Caco-2 (cell line): ENCODE measurements at regions of chr4 and their contacts with region 1.

Region 1: GRCh38 chr4:136637071-136637777 is 895.1 kb downstream of the PCDH18 start:
- DNase-seq: peak in 1 of 2 experiments; percentile 40
- H3K4me3 ChIP-seq: no peak overlapping the region
- H3K4me3 Mint-ChIP-seq: no peak overlapping the region
- H3K27ac Mint-ChIP-seq: no peak overlapping the region
- H3K4me1 ChIP-seq: no peaks in the 10 kb centered on the region
- H3K4me1 Mint-ChIP-seq: no peaks in the 10 kb centered on the region
- H3K27me3 ChIP-seq: no peaks in the 10 kb centered on the region
- H3K27me3 Mint-ChIP-seq: peaks cover 8% of the 10 kb centered on the region
- CTCF ChIP-seq: peak; percentile 46 to 57

Region 2: DNA sequence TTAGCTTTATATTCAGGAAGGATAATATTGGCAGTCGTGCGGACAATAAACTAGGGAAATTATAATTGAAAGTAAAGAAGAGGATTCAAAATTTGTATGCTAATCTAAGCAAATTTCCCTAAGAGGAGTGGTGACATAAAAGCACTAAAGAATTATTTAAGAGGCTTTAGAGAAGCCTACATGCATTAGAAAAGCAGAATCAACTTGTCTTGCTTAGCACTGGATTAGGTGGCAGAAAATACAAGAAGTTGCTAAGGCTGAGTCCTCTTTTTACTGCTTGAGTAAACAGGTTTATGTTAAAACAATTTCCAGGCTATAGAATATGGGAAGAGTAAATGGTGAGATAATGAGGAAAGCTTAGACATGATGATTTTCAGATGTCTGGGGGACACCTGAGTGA is 96.5 kb before region 1 on chr4:
- CTCF ChIA-PET with region 1: no interaction called
- POLR2A ChIA-PET with region 1: no interaction called
- intact Hi-C with region 1: no loop called
- DNase-seq: no peak
- H3K4me3 ChIP-seq: no peak overlapping the region
- H3K4me3 Mint-ChIP-seq: no peak overlapping the region
- H3K27ac Mint-ChIP-seq: no peak overlapping the region
- H3K4me1 ChIP-seq: no peaks in the 10 kb centered on the region
- H3K4me1 Mint-ChIP-seq: no peaks in the 10 kb centered on the region
- H3K27me3 ChIP-seq: no peaks in the 10 kb centered on the region
- H3K27me3 Mint-ChIP-seq: peaks cover 2% of the 10 kb centered on the region
- CTCF ChIP-seq: no peak

Region 3: DNA sequence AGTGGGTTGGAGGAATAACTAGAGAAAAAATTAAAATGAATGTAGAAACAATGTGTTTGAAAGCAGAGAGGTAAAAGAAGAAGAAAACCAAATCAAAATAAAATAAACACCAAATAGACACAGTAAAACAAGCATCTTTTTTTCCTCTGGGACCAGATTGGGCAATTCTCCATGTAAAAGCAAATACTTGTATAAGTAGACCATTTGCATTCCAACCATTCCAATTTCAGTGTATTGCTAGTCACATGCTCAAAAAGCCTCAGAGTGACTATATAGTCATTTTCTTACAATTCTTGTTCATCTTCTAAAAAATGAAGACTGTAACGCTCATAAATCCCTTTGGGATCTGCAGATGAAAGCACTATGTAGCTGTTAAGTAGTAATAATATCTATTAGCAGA is 74.4 kb before region 1 on chr4:
- CTCF ChIA-PET with region 1: no interaction called
- POLR2A ChIA-PET with region 1: no interaction called
- intact Hi-C with region 1: loop called (anchors 5 kb)
- DNase-seq: peak in 1 of 2 experiments; percentile 10
- H3K4me3 ChIP-seq: no peak overlapping the region
- H3K4me3 Mint-ChIP-seq: no peak overlapping the region
- H3K27ac Mint-ChIP-seq: no peak overlapping the region
- H3K4me1 ChIP-seq: peaks cover 19% of the 10 kb centered on the region
- H3K4me1 Mint-ChIP-seq: no peaks in the 10 kb centered on the region
- H3K27me3 ChIP-seq: no peaks in the 10 kb centered on the region
- H3K27me3 Mint-ChIP-seq: no peaks in the 10 kb centered on the region
- CTCF ChIP-seq: no peak

Region 4: DNA sequence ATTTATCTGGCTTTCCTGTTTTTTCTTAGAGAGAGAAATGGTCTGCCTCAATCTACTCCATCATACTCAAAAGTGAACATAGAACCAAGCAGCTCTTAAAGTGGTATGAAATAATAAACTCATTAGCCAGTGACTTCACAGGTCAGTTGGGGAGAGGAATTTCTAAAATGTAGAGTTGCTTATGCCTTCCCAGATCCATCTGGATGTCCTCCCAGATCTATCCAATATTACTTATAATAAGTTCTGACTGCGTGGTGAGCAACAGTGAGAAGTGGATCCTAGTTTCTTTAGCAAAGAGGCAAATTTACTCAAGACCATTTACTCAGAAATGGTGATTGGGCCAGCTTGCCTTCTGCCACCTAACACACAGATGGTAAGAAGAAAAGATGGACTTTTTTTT is 147.1 kb after region 1 on chr4:
- CTCF ChIA-PET with region 1: no interaction called
- POLR2A ChIA-PET with region 1: no interaction called
- intact Hi-C with region 1: no loop called
- DNase-seq: no peak
- H3K4me3 ChIP-seq: no peak overlapping the region
- H3K4me3 Mint-ChIP-seq: no peak overlapping the region
- H3K27ac Mint-ChIP-seq: no peak overlapping the region
- H3K4me1 ChIP-seq: no peaks in the 10 kb centered on the region
- H3K4me1 Mint-ChIP-seq: no peaks in the 10 kb centered on the region
- H3K27me3 ChIP-seq: no peaks in the 10 kb centered on the region
- H3K27me3 Mint-ChIP-seq: no peaks in the 10 kb centered on the region
- CTCF ChIP-seq: no peak

Region 5: GRCh38 chr4:136927172-136927571 is 289.9 kb after region 1 on chr4:
- CTCF ChIA-PET with region 1: no interaction called
- POLR2A ChIA-PET with region 1: no interaction called
- intact Hi-C with region 1: no loop called
- DNase-seq: no peak
- H3K4me3 ChIP-seq: no peak overlapping the region
- H3K4me3 Mint-ChIP-seq: no peak overlapping the region
- H3K27ac Mint-ChIP-seq: no peak overlapping the region
- H3K4me1 ChIP-seq: no peaks in the 10 kb centered on the region
- H3K4me1 Mint-ChIP-seq: no peaks in the 10 kb centered on the region
- H3K27me3 ChIP-seq: no peaks in the 10 kb centered on the region
- H3K27me3 Mint-ChIP-seq: no peaks in the 10 kb centered on the region
- CTCF ChIP-seq: no peak